ENCODE measurements at regions of chr16 and their contacts with region 1.

Region 1: GRCh38 chr16:2205104-2205966 is at the start of gene MLST8:
- DNase-seq: peak; percentile 87 to 96
- H3K4me3 ChIP-seq: peak within 1 kb of the TSS; percentile 65 to 75 (median 69)
- H3K27ac ChIP-seq: peak within 1 kb of the TSS; percentile 95 to 99 (median 96)
- H3K4me1 ChIP-seq: peaks cover 12 to 28% (median 22%) of the 10 kb centered on the region in 4 donors
- H3K27me3 ChIP-seq: no peaks in the 10 kb centered on the region
- CTCF ChIP-seq: peak in 1 of 7 experiments; percentile 27
- EP300 ChIP-seq: no peak
- POLR2A ChIP-seq: no peak
- total RNA-seq, gene MLST8: 7.5 to 235 (median 56.2) TPM

Region 2: DNA sequence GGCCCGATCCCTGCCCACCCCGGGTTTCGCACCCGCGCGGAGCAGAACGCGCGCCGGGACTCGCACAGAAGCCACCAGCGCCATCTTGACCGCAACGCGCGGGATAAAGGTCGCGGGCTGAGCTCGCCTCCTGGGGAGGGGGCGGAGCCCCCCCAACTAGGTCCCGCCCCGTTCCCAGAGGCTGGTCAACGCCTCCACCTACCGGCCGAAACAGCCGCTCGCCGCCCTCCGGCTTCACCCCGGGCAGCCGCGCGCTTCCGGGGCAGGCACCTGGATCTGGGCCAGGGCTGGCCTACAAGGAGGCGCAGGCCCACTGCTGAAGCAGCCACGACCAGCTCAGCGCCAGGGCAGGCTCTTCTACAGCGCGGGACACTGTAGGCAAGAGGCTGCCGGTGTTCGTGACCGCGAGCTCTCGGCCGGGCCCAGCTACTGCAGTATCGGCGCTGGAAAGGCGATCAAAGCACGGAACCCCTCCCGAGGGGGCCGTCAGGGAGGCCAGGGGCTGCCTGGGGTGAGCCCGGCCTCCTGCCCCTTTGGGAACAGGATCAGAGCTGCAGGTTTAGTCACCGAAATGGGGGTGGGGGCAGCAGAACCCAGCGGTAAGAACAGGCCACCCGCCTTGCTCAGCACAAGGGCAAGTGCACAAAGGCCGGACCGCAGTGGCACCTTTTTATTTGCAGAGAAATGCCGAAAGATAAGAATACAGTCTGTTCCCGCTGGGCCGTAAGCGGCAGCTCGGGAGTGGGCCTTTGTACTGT is 46.3 kb after region 1 on chr16 and contains the start of gene ECI1:
- intact Hi-C with region 1: loop called (anchors 10 kb)
- DNase-seq: peak; percentile 98
- H3K4me3 ChIP-seq: peak within 1 kb of the TSS; percentile 67 to 75 (median 71)
- H3K27ac ChIP-seq: peak within 1 kb of the TSS; percentile 88 to 99 (median 93)
- H3K4me1 ChIP-seq: peaks cover 15 to 36% (median 29%) of the 10 kb centered on the region in 4 donors
- H3K27me3 ChIP-seq: no peaks in the 10 kb centered on the region
- CTCF ChIP-seq: peak in 6 of 7 experiments; percentile 10 to 83 (median 70)
- EP300 ChIP-seq: no peak
- POLR2A ChIP-seq: peak in 1 of 4 donors; percentile 36
- total RNA-seq, gene ECI1: 20.4 to 234 (median 113) TPM

Measured in stomach (tissue), 19 donors.